Aorta (tissue), 5 donors: ENCODE measurements at regions of chr1 and their contacts with region 1.

Region 1: GRCh38 chr1:17611975-17612374 is 72.5 kb downstream of the ARHGEF10L start:
- DNase-seq: no peak
- ATAC-seq: no peak
- H3K4me3 ChIP-seq: no peak overlapping the region
- H3K27ac ChIP-seq: peak overlapping the region in 1 of 2 donors; percentile 7
- H3K4me1 ChIP-seq: no peaks in the 10 kb centered on the region
- H3K27me3 ChIP-seq: no peaks in the 10 kb centered on the region

Region 2: GRCh38 chr1:17648457-17649145 is 36.6 kb after region 1 on chr1:
- intact Hi-C with region 1: loop called in 1 of 2 experiments (anchors 5 kb)
- DNase-seq: peak; percentile 82 to 89
- ATAC-seq: peak; percentile 68
- H3K4me3 ChIP-seq: no peak overlapping the region
- H3K27ac ChIP-seq: peak overlapping the region; percentile 10 to 97
- H3K4me1 ChIP-seq: peaks cover 0 to 2% of the 10 kb centered on the region in 2 donors
- H3K27me3 ChIP-seq: no peaks in the 10 kb centered on the region